Activated CD4-positive, alpha-beta T cell treated with anti-CD3 and anti-CD28 coated beads, Interleukin-2, amount 10 ng/mL, durations not matched to agents 7 days and 5 days (primary cell): ENCODE measurements at regions of chr17 and their contacts with region 1.

Region 1: GRCh38 chr17:32174889-32175288 is 32.6 kb downstream of the RHOT1 start:
- DNase-seq: no peak
- H3K4me3 Mint-ChIP-seq: no peak overlapping the region
- H3K27ac Mint-ChIP-seq: no peak overlapping the region
- H3K4me1 Mint-ChIP-seq: no peaks in the 10 kb centered on the region
- H3K27me3 Mint-ChIP-seq: no peaks in the 10 kb centered on the region

Region 2: GRCh38 chr17:32142038-32142856 is 32.6 kb before region 1 on chr17 and contains the start of gene RHOT1:
- CTCF ChIA-PET with region 1: no interaction called
- POLR2A ChIA-PET with region 1: no interaction called
- DNase-seq: peak; percentile 69
- H3K4me3 Mint-ChIP-seq: peak within 1 kb of the TSS; percentile 99
- H3K27ac Mint-ChIP-seq: peak within 1 kb of the TSS; percentile 86
- H3K4me1 Mint-ChIP-seq: peaks cover 33% of the 10 kb centered on the region
- H3K27me3 Mint-ChIP-seq: no peaks in the 10 kb centered on the region
- total RNA-seq, gene RHOT1: 26.4 to 33.6 TPM

Region 3: DNA sequence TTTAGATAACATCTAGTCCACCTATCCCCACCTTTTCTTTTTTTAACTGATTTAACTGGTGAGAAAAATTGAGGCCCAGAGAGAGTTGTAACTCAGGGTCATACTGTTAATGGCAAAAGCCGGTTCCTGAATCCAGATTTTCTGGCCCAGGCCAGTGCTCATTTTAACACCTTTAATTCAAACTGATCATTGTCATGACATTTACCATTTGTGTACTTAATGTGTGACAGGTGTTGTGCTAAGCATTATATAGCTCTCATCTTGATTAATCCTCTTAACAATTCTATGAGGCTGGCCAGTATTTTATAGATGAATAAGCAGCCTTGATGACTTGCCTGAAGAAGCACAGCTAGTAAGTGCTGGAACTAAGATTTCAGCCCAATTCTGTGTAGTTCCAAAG is 18.2 kb before region 1 on chr17:
- CTCF ChIA-PET with region 1: no interaction called
- POLR2A ChIA-PET with region 1: no interaction called
- DNase-seq: no peak
- H3K4me3 Mint-ChIP-seq: no peak overlapping the region
- H3K27ac Mint-ChIP-seq: no peak overlapping the region
- H3K4me1 Mint-ChIP-seq: peaks cover 6% of the 10 kb centered on the region
- H3K27me3 Mint-ChIP-seq: no peaks in the 10 kb centered on the region

Region 4: GRCh38 chr17:32206861-32207260 is 32.0 kb after region 1 on chr17:
- CTCF ChIA-PET with region 1: no interaction called
- POLR2A ChIA-PET with region 1: interaction called, 12 read pairs
- DNase-seq: no peak
- H3K4me3 Mint-ChIP-seq: no peak overlapping the region
- H3K27ac Mint-ChIP-seq: no peak overlapping the region
- H3K4me1 Mint-ChIP-seq: peaks cover 2% of the 10 kb centered on the region
- H3K27me3 Mint-ChIP-seq: no peaks in the 10 kb centered on the region

Region 5: DNA sequence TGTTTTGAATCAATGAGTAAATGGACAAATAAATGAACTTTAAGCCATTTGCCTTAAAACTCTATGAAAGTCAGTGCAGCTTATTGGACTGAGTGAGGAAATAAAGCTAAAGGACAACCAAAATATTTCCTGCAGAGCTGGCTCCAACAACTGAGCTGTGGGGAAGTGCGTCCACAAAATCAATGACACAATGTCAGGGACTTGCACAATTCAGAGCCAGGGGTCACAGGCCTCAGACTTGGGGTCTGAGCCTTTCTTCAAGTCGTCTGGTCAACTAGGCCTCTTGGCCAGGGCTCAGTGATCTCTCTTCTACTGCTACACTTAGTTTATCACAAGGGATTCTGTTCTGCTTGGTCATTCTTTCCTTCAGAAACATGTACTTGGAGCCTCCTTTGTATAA is 64.6 kb after region 1 on chr17:
- CTCF ChIA-PET with region 1: no interaction called
- POLR2A ChIA-PET with region 1: no interaction called
- DNase-seq: no peak
- H3K4me3 Mint-ChIP-seq: no peak overlapping the region
- H3K27ac Mint-ChIP-seq: no peak overlapping the region
- H3K4me1 Mint-ChIP-seq: no peaks in the 10 kb centered on the region
- H3K27me3 Mint-ChIP-seq: no peaks in the 10 kb centered on the region